Activated naive CD4-positive, alpha-beta T cell treated with anti-CD3 and anti-CD28 coated beads, Interleukin-2, amount 10 ng/mL, durations not matched to agents 7 days and 5 days (primary cell): ENCODE measurements at regions of chr19 and their contacts with region 1.

Region 1: DNA sequence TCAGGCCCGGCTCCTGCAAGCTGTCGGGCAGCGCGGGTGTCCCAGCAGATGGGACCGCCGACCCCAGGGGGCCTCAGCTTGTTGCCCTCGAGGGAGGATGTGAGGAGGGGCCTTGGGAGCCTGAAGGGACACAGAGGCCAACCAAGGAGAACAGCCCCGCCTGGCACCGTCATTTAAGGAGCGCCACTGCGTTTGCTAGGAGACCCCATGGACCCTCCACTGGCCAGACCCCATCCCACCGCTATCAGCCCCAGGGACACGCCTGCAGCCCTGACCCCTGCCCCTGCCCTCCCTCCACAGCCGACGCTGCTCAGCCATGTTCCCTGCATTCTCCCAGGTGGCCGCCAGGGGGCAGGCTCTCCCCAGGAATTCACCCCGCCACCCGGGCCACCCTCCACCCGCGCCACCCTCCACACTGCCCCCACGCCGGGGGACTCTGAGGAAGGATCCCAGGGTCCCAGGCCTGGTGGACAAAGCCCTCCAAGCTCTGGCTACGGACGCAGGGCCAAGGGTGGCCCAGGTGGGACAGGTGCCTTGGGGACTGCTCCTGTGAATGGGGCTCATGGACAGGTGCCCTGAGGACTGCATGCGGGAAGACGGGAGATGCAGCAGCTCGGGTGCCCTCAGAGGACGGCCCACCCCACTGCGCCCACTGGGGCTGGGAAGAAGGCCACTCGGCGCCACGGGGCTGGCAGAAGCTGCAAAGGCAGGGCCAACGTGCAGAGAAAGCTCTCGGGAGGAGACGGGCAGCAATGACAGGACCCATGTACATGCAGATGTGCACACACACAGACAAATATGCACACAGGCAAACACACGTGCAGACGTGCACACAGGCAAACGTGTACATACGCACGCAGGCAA is 34.4 kb downstream of the PIP5K1C start:
- DNase-seq: peak; percentile 84
- H3K4me3 Mint-ChIP-seq: no peak overlapping the region
- H3K27ac Mint-ChIP-seq: no peak overlapping the region
- H3K4me1 Mint-ChIP-seq: peaks cover 4% of the 10 kb centered on the region
- H3K27me3 Mint-ChIP-seq: peaks cover 4% of the 10 kb centered on the region

Region 2: DNA sequence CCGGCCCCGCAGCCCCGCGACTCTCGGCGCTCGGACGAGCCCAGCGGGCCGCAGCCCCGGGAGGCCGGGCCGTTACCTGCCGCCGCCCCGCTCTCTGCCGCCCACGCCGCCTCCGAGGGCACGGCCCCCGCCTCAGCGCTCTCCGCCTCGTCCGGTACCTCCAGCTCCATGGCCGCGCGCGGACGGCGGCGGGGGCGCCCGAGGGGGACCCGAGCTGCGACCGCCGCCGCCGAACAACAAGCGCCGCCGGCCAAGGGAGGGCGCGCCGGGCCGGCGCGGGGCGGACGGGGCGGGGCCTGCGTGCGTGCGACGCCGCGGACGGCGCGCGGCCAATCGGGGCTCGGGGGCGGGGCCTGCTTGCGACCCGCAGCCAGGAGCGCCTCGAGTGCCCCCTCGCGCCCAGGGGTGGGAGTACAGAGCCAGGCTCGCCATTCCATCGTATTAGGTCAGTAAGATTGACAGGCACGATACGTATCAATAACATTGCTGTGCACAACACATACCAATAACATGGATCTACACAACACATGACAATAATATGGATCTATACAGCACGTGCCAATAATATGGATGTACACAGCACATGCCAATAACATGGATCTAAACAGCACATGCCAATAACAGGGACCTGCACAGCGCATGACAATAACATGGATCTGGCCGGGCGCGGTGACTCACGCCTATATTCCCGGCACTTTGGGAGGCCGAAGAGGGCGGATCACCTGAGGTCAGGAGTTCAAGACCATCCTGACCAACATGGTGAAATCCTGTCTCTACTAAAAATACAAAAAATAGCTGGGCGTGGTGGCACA is 34.5 kb after region 1 on chr19 and contains the start of gene PIP5K1C:
- CTCF ChIA-PET with region 1: interaction called, 21 read pairs
- DNase-seq: peak; percentile 93
- H3K4me3 Mint-ChIP-seq: peak within 1 kb of the TSS; percentile 92
- H3K27ac Mint-ChIP-seq: peak within 1 kb of the TSS; percentile 83
- H3K4me1 Mint-ChIP-seq: peaks cover 19% of the 10 kb centered on the region
- H3K27me3 Mint-ChIP-seq: peaks cover 10% of the 10 kb centered on the region

Region 3: DNA sequence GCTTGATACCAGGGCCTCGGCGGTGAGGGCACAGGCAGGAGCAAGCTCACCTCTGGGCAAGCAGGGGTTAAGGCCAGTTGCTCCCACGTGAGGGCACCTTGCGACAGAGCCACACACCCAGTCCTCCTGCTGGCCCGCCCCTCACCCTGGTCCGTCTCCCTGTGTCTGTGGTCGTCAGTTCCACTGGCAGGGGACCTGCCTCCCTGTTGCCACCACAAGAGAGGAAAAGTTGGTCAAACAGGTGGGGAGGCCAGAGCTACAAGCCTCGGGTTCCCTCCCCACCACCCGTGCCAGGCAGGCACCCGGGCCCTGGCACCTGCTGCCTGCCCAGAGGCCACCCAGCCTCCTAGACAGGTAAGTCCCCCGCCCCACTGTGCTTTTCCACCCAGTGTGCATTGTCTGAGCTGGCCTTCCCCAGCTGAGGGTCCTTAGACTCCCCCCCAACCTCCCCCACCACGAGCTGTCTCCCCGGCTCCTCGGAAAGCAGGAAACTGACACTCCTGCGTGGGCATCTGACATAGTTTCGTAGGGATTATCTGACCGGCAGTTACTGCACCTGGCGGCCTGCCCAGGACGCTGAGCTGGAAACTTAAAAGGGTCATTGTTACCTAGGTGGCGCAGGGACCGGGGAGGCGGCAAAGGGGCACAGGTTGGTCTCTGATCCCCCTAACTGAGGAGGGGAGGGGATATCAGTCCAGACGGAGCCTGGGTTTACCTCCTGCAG is 42.5 kb after region 1 on chr19 and contains the start of gene TJP3:
- CTCF ChIA-PET with region 1: interaction called, 21 read pairs
- DNase-seq: no peak
- H3K4me3 Mint-ChIP-seq: no peak within 1 kb of the TSS
- H3K27ac Mint-ChIP-seq: no peak within 1 kb of the TSS
- H3K4me1 Mint-ChIP-seq: peaks cover 4% of the 10 kb centered on the region
- H3K27me3 Mint-ChIP-seq: peaks cover 63% of the 10 kb centered on the region